ENCODE measurements at regions of chr6 and their contacts with region 1.

Region 1: DNA sequence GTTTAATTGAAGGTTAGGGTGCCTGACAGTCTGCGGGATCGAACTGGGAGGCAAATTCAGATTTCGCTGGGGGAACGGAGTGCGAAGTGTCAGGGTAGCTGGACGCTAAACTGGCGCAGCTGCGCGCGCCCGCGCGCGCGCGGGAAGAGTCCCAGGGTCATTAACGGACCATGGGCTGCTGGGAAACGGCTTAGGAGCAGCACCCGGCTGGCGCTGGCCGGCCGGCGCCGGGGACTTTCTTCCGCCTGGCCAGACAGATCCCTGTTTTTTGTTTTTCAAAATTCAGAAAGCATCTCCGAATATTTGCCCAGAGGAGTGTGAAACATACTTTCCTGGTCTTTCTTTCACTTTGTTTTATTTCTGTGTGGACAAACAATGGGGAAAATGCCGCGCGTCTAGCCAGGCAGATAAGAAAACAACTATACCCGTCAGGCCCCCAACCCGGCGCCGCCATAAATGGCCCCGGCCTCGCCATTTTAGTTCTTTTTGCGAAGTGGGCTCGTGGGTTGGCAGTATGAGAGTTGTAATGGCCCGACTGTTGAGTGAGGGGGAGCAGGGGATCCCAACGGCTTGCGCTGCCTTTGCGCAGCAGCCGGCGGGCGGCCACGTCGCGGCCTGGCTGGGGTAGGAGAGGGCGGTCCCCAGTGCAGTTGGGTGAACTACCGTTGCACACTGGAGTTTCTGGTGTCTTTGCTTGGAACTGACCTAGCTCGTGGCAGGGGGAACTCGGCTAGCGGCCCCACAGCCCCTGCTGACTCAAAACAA is 7.1 kb downstream of the HSPA1B start:
- DNase-seq: peak; percentile 90
- ATAC-seq: peak; percentile 92 to 93
- H3K4me3 ChIP-seq: peak overlapping the region; percentile 78
- H3K27ac ChIP-seq: peak overlapping the region; percentile 96
- H3K4me1 ChIP-seq: peaks cover 72% of the 10 kb centered on the region
- H3K27me3 ChIP-seq: no peaks in the 10 kb centered on the region
- CTCF ChIP-seq: no peak

Region 2: DNA sequence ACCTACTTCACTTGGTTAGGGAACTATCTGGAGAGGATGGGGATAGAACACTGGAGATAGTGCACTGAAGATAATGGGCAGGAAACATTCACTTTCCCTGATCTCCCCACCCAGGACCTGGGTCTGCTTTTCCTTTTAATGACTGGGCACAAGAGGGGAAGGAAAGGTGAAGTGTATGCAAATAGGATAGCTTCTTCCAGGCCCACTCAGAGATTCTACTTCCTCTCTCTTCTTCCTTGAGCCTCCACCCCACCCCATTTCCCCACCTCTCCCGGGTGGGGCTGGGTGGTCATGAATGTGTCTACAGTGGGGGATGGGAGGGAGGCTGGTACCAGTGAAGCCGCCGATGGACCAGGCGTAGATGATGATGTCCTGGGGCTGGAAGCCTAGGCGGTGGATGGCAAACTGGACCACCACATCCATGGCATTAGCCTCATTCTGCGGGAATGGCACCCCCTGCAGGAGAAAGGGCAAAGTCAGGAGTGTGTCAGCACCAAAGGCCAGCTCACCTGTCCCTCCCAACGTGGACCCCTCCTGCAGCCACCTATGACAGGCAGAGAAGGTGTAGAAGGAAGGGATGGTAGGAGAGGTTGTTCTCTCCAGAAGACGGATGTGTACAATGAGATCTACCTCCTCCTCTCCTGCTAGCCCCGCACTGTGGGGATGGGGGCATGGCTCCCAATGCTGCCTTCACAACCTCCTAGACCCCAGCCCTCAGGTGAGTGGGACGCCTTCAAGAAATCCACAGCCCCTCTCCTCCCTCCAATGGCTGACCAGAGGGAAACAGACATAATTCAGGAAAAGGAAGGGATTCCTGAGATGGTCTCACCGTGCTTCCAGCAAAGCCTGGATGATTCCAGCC is 145.1 kb before region 1 on chr6:
- intact Hi-C with region 1: no loop called
- DNase-seq: no peak
- ATAC-seq: no peak
- H3K4me3 ChIP-seq: no peak overlapping the region
- H3K27ac ChIP-seq: peak overlapping the region; percentile 33
- H3K4me1 ChIP-seq: no peaks in the 10 kb centered on the region
- H3K27me3 ChIP-seq: no peaks in the 10 kb centered on the region
- CTCF ChIP-seq: peak; percentile 19

Region 3: DNA sequence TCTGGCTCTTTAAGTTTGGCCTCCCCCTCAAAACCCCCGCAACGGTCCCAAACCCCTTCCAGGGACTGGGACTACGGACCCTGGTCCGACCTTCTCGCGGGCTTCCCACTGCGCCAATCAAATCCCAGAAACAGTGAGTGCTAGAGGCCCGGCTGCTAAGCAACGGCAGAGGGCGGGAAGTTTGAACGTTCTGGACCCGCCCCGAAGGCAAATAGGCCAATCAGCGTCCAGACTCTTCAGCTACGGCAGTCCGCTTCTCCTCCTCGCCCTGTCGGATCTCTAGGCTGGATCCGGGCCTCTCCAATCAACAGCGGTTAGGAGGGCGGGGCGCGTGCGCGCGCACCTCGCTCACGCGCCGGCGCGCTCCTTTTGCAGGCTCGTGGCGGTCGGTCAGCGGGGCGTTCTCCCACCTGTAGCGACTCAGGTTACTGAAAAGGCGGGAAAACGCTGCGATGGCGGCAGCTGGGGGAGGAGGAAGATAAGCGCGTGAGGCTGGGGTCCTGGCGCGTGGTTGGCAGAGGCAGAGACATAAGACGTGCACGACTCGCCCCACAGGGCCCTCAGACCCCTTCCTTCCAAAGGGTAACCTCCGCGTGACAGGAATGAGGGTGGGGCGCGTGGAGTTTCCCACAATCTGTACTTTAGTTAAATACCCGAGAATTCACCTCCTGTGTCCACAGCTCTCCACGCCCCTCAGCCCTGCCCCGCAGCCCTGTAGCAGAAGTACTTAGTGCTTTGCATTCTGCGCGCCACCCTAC is 94.8 kb before region 1 on chr6 and contains the start of gene MSH5:
- intact Hi-C with region 1: loop called (anchors 10 kb)
- DNase-seq: peak; percentile 98
- ATAC-seq: peak; percentile 92 to 96
- H3K4me3 ChIP-seq: peak within 1 kb of the TSS; percentile 90
- H3K27ac ChIP-seq: peak within 1 kb of the TSS; percentile 93
- H3K4me1 ChIP-seq: peaks cover 39% of the 10 kb centered on the region
- H3K27me3 ChIP-seq: no peaks in the 10 kb centered on the region
- CTCF ChIP-seq: no peak
- total RNA-seq, gene MSH5: 14.9 TPM

Region 4: DNA sequence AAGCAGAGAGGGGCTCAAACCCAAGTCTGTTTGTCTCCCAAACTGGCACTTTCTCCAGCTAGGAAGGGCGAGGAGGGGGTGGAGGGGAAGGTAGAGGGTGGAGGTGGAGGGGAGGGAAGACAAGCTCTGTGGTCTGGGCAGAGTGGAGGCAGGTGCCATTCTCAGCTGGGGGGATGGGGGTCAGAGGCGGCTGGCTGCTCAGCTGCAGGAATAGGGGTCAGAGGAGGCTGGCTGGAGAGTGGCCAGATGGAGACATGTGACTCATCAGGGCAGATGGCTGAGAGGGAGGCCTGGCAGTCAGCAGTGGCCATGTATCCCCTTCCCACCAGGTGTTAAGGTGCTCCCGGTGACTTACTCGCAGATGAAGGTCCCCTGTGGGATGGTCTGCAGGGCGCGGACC is 47.7 kb after region 1 on chr6:
- intact Hi-C with region 1: no loop called
- DNase-seq: no peak
- ATAC-seq: no peak
- H3K4me3 ChIP-seq: no peak overlapping the region
- H3K27ac ChIP-seq: no peak overlapping the region
- H3K4me1 ChIP-seq: peaks cover 2% of the 10 kb centered on the region
- H3K27me3 ChIP-seq: no peaks in the 10 kb centered on the region
- CTCF ChIP-seq: no peak

Region 5: DNA sequence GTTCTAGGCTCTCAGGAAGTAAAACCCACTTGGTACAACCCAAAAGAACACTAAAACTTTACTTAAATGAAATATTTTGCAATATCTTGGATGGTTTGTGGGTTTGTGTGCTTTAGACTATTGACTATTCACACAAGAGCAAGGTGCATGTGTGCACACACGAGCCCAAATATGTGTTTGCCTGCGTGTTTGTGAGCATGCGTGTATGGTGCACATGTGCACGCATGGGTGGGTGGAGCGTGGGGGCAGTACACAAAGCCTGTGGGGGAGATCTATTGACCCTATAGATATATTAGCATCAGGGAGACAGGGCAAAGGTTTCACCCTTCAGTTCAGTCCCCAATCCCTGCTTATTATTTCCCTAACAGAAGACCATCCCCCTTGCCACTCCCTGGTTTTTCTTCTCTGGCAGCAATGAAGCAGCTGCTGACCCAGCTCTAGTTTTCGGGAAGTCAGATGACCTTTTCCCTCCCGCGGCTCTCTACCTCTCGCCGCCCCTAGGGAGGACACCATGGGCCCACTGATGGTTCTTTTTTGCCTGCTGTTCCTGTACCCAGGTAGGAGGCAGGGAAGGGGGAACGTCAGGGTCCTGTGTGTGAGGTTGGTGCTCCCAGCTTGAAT is 92.7 kb after region 1 on chr6 and contains the start of gene C2:
- intact Hi-C with region 1: no loop called
- DNase-seq: peak; percentile 63
- ATAC-seq: peak; percentile 82 to 83
- H3K4me3 ChIP-seq: peak within 1 kb of the TSS; percentile 58
- H3K27ac ChIP-seq: peak within 1 kb of the TSS; percentile 76
- H3K4me1 ChIP-seq: peaks cover 11% of the 10 kb centered on the region
- H3K27me3 ChIP-seq: no peaks in the 10 kb centered on the region
- CTCF ChIP-seq: no peak
- total RNA-seq, gene C2: 311 TPM

Region 6: GRCh38 chr6:31971993-31972708 is 137.5 kb after region 1 on chr6 and contains the start of gene DXO:
- intact Hi-C with region 1: no loop called
- DNase-seq: peak; percentile 98
- ATAC-seq: peak; percentile 95 to 96
- H3K4me3 ChIP-seq: peak within 1 kb of the TSS; percentile 79
- H3K27ac ChIP-seq: peak within 1 kb of the TSS; percentile 95
- H3K4me1 ChIP-seq: peaks cover 31% of the 10 kb centered on the region
- H3K27me3 ChIP-seq: no peaks in the 10 kb centered on the region
- CTCF ChIP-seq: no peak
- total RNA-seq, gene DXO: 16.5 TPM

Measured in lower lobe of right lung (tissue), 2 donors.